ENCODE measurements at regions of chr2 and their contacts with region 1.

Region 1: DNA sequence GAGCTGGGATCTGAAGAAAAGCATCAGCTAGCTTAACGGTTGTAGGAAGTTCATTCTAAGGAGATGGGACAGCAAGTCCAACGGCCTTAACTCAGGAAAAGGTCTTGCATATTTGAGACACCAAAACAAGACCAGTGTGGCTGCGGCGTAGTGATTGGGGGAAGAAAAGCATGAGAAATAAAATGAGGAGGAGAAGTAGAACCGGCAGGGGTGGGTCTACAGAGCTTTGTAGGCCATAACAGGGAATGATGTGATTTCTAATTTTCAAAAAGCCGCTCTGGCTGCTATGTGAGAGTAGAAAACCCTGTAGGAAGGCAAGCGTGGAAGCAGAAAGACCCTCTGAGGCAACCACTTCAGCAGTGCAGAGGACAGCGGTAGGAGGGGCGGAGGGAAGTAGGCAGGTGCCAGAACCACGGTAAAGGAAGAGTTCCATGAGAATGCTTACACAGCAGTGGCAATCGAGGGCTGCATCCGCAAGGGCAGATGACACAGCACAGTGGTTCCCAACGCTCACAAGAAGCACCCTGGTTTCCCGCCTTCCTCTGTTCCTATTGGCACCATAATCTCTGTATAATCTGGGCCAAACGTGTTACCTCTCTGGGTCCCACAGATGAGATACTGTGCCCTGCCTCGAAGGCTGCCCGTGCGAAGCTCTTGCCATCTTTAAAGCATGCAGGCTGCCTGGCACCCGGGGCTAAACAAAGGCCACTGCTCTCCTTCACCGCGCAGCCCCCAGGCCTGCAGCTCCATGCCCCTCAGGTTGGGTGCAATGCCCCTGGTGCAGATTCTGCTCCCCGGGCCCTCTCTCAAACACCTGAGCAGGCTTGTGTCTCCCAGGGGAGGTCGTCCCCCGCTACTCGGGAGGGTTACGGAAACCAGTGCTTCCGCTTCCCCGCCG is 791 bp downstream of the ANKRD39 start:
- DNase-seq: peak in 1 of 2 donors; percentile 32
- H3K4me3 ChIP-seq: peak overlapping the region; percentile 11 to 59 (median 44)
- H3K27ac ChIP-seq: peak overlapping the region in 2 of 3 donors; percentile 64 to 79
- H3K4me1 ChIP-seq: peaks cover 10 to 18% of the 10 kb centered on the region in 2 donors
- H3K27me3 ChIP-seq: no peaks in the 10 kb centered on the region
- CTCF ChIP-seq: no peak
- POLR2A ChIP-seq: no peak

Region 2: GRCh38 chr2:96816128-96816835 is 40.7 kb before region 1 on chr2 and contains the start of gene CNNM3:
- intact Hi-C with region 1: loop called (anchors 5 kb)
- DNase-seq: peak; percentile 97 to 98
- H3K4me3 ChIP-seq: peak within 1 kb of the TSS; percentile 32 to 78 (median 51)
- H3K27ac ChIP-seq: peak within 1 kb of the TSS; percentile 93 to 94 (median 94)
- H3K4me1 ChIP-seq: peaks cover 26 to 32% of the 10 kb centered on the region in 2 donors
- H3K27me3 ChIP-seq: no peaks in the 10 kb centered on the region
- CTCF ChIP-seq: peak; percentile 30 to 81 (median 51)
- POLR2A ChIP-seq: peak; percentile 48 to 93
- total RNA-seq, gene CNNM3: 18.2 to 22.8 (median 20.4) TPM

Region 3: DNA sequence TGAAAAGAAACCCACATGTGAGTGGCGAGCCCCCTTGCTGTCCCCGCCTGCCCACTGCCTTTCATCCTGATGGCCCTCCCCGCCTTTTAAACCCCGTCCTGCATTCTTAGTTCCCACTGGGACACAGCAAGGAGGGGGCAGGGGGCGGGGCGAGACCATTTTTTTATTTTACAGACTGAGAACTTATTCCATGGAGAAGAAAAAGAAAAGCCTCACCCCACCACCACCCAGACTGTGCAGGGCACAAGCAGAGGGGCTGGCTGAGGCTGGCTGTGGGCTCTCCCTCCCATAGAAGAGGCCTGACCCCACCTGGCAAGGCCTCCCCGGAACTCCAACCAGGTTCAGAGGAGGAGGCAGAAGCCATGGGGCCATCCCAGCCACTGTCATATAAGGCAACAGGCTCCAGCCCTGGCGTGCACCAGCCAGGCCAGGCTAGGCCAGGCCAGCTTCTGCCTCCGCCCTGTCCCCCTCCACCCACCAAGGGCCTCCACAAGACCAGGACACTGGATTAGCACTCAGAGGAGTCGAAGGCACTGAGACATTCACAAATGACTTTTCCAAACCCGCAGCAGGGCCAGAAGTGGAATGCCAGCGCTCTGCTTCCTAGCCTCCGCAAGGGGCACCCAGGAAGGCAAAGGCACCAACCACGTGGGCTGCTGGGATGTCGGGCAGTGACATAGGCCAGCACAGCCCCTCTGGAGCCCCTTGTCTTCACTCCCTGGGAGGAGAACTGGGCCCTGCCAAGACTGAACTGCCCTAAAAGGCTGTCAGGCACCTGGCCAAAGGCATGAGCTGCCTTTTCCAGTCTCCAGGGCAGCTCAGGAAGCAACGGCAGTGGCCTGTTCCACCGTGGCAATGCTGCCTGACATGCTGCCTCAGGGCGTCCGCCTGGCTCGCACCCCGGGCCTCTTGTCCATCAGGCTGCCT is 50.4 kb after region 1 on chr2:
- intact Hi-C with region 1: loop called (anchors 5 kb)
- DNase-seq: peak; percentile 72 to 74
- H3K4me3 ChIP-seq: no peak overlapping the region
- H3K27ac ChIP-seq: peak overlapping the region; percentile 63 to 85 (median 84)
- H3K4me1 ChIP-seq: peaks cover 12 to 22% of the 10 kb centered on the region in 2 donors
- H3K27me3 ChIP-seq: no peaks in the 10 kb centered on the region
- CTCF ChIP-seq: no peak
- POLR2A ChIP-seq: no peak

Region 4: GRCh38 chr2:96951093-96951654 is 94.1 kb after region 1 on chr2:
- intact Hi-C with region 1: loop called (anchors 2 kb)
- DNase-seq: peak; percentile 85 to 87
- H3K4me3 ChIP-seq: no peak overlapping the region
- H3K27ac ChIP-seq: no peak overlapping the region
- H3K4me1 ChIP-seq: peaks cover 0 to 19% of the 10 kb centered on the region in 2 donors
- H3K27me3 ChIP-seq: no peaks in the 10 kb centered on the region
- CTCF ChIP-seq: peak; percentile 88 to 97 (median 95)
- POLR2A ChIP-seq: no peak

Measured in thyroid gland (tissue), 4 donors.